A673 (cell line): ENCODE measurements at regions of chr7 and their contacts with region 1.

Region 1: GRCh38 chr7:14055813-14056212 is 66.3 kb upstream of the ETV1 start:
- DNase-seq: no peak
- H3K4me3 ChIP-seq: no peak overlapping the region
- H3K27ac ChIP-seq: no peak overlapping the region
- H3K4me1 ChIP-seq: no peaks in the 10 kb centered on the region
- H3K27me3 ChIP-seq: no peaks in the 10 kb centered on the region
- CTCF ChIP-seq: no peak

Region 2: GRCh38 chr7:13874783-13875182 is 181.0 kb before region 1 on chr7:
- CTCF ChIA-PET with region 1: no interaction called
- POLR2A ChIA-PET with region 1: no interaction called
- intact Hi-C with region 1: no loop called
- DNase-seq: no peak
- H3K4me3 ChIP-seq: no peak overlapping the region
- H3K27ac ChIP-seq: no peak overlapping the region
- H3K4me1 ChIP-seq: no peaks in the 10 kb centered on the region
- H3K27me3 ChIP-seq: no peaks in the 10 kb centered on the region
- CTCF ChIP-seq: no peak

Region 3: GRCh38 chr7:14085901-14086300 is 30.1 kb after region 1 on chr7:
- CTCF ChIA-PET with region 1: no interaction called
- POLR2A ChIA-PET with region 1: no interaction called
- intact Hi-C with region 1: loop called (anchors 1 kb)
- DNase-seq: no peak
- H3K4me3 ChIP-seq: no peak overlapping the region
- H3K27ac ChIP-seq: no peak overlapping the region
- H3K4me1 ChIP-seq: no peaks in the 10 kb centered on the region
- H3K27me3 ChIP-seq: no peaks in the 10 kb centered on the region
- CTCF ChIP-seq: no peak